ENCODE measurements at regions of chr10 and their contacts with region 1.

Region 1: GRCh38 chr10:59906417-59907202 is at the start of gene CCDC6:
- DNase-seq: peak; percentile 97
- ATAC-seq: peak; percentile 82
- H3K4me3 Mint-ChIP-seq: peak within 1 kb of the TSS; percentile 97
- H3K27ac Mint-ChIP-seq: peak within 1 kb of the TSS; percentile 99
- H3K4me1 Mint-ChIP-seq: peaks cover 64% of the 10 kb centered on the region
- H3K27me3 Mint-ChIP-seq: no peaks in the 10 kb centered on the region
- total RNA-seq, gene CCDC6: 49.7 to 53.0 TPM

Region 2: DNA sequence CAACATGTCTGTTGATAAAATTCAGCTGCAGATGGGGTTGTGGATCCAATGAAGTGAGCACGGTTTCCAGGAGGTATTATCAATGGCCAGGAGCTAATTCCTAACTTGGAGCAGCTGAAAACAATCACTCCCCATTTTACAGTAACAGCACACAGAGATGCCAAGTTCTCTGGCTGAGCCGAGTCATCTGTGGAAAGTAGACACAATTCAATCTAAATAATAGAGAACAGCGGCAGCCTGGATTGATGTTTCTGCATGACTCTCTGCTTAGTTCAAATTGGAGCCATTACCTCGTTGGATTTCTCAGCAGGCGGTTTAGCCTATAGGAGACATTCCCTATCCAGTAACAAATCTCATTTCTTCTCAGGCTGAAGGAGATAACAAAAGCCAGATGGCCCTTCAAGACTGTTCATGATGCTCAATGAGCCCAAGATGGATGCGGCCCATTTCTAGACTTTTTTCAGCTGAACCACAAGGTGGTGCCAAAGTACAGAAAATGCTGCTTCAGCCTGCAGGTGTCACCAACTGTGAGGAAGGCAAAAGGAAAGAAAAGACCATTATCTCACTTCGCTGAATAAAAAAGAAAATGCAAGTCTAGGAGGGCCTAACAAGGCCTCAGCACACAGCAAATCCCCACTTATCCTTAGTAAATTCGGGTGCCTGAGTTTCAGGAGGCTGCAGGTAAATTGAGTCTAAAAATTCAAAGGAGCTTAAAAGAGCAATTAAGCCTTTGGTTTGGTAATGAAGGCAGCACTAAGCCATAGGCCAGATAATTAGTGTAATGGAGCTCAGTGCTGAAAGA is 280.7 kb before region 1 on chr10:
- CTCF ChIA-PET with region 1: interaction called, 4 read pairs
- POLR2A ChIA-PET with region 1: no interaction called
- intact Hi-C with region 1: loop called (anchors 1 to 10 kb)
- DNase-seq: peak; percentile 59
- ATAC-seq: peak; percentile 82
- H3K4me3 Mint-ChIP-seq: no peak overlapping the region
- H3K27ac Mint-ChIP-seq: no peak overlapping the region
- H3K4me1 Mint-ChIP-seq: peaks cover 2% of the 10 kb centered on the region
- H3K27me3 Mint-ChIP-seq: no peaks in the 10 kb centered on the region

Region 3: DNA sequence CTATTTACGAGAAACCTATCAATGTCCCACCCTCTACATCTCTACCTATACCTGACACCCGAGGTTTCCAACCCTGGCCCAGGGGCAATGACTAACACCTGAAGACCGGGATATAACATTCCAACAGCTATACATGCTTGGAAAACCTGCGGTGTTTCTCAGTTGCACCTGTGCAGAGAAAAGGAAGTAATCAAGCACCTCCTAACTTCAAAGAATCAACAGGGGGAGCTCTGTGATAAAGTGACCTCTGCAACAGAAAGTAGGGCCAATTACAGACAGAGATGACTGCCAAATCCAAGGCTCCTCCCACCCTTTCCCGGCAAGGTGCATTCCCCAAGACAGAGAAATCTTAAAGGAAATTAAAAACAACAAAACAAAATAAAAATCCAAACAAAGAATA is 41.5 kb before region 1 on chr10:
- CTCF ChIA-PET with region 1: interaction called, 18 read pairs
- POLR2A ChIA-PET with region 1: interaction called, 9 read pairs
- intact Hi-C with region 1: loop called (anchors 1 kb)
- DNase-seq: no peak
- ATAC-seq: peak; percentile 34
- H3K4me3 Mint-ChIP-seq: no peak overlapping the region
- H3K27ac Mint-ChIP-seq: no peak overlapping the region
- H3K4me1 Mint-ChIP-seq: peaks cover 65% of the 10 kb centered on the region
- H3K27me3 Mint-ChIP-seq: no peaks in the 10 kb centered on the region

Region 4: GRCh38 chr10:60008816-60009215 is 102.2 kb after region 1 on chr10:
- CTCF ChIA-PET with region 1: no interaction called
- POLR2A ChIA-PET with region 1: no interaction called
- intact Hi-C with region 1: no loop called
- DNase-seq: no peak
- ATAC-seq: no peak
- H3K4me3 Mint-ChIP-seq: no peak overlapping the region
- H3K27ac Mint-ChIP-seq: no peak overlapping the region
- H3K4me1 Mint-ChIP-seq: no peaks in the 10 kb centered on the region
- H3K27me3 Mint-ChIP-seq: peaks cover 4% of the 10 kb centered on the region

Region 5: DNA sequence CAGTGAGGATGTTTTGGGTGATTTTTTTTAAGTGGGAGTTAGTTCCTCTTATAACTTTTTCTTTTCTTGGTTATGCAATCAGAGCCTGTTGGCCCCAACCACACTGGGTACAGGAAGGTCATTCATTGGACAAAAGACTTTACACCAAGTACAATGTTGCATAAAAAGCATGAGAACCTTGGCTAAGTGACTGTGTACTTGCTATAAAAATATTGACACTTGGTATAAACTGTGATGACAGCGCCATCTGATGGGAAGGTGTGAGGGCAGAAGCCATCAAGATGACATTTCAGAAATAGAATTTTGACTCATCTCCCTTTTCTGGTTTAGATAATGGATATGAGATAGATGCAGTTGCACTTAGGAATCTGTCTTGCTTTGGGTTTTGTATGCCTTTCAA is 126.1 kb after region 1 on chr10:
- CTCF ChIA-PET with region 1: interaction called, 3 read pairs
- POLR2A ChIA-PET with region 1: no interaction called
- intact Hi-C with region 1: loop called (anchors 2 to 5 kb)
- DNase-seq: peak; percentile 74
- ATAC-seq: peak; percentile 63
- H3K4me3 Mint-ChIP-seq: no peak overlapping the region
- H3K27ac Mint-ChIP-seq: no peak overlapping the region
- H3K4me1 Mint-ChIP-seq: peaks cover 9% of the 10 kb centered on the region
- H3K27me3 Mint-ChIP-seq: no peaks in the 10 kb centered on the region

Region 6: GRCh38 chr10:60728056-60728455 is 821.4 kb after region 1 on chr10:
- CTCF ChIA-PET with region 1: no interaction called
- POLR2A ChIA-PET with region 1: no interaction called
- intact Hi-C with region 1: loop called in 1 of 2 experiments (anchors 2 kb)
- DNase-seq: no peak
- ATAC-seq: peak; percentile 52
- H3K4me3 Mint-ChIP-seq: peak overlapping the region; percentile 76
- H3K27ac Mint-ChIP-seq: peak overlapping the region; percentile 97
- H3K4me1 Mint-ChIP-seq: peaks cover 76% of the 10 kb centered on the region
- H3K27me3 Mint-ChIP-seq: no peaks in the 10 kb centered on the region